Pancreas (tissue), 10 donors: ENCODE measurements at regions of chr16 and their contacts with region 1.

Region 1: DNA sequence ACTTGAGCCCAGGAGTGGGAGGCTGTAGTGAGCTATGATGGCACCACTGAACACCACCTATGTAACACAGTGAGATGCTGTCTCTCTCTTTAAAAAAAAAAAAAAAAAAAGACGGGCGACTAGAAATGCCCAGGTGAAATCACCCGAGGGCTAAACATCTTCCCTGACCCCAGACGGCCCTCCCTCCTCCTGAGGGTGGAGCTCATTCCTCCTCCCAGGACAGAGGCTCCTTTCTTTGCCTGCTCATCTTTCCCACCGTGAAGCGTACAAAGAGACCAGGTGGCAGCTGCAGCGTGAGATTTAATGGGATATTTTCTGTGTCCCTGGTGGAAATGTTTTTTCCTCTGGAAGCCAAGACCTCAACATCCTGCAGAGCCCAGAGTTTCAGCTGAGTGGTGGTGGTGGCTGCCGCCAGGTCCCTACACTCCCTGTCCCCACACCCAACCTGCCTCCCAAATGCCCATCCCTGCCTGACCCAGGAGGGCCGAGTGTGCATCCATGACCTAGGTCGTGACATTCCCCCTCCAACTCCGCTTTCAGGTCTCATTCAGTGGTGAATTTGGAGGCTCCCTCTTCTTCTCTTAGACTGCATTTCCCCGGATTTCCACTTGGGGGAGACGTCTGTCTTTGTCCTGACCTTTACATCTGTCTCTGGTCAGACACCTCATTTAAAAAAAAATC is 14.4 kb upstream of the GPRC5B start:
- DNase-seq: peak in 3 of 6 donors; percentile 26 to 61 (median 32)
- ATAC-seq: peak; percentile 64 to 87 (median 80)
- H3K4me3 ChIP-seq: no peak overlapping the region
- H3K27ac ChIP-seq: no peak overlapping the region
- H3K4me1 ChIP-seq: no peaks in the 10 kb centered on the region
- H3K27me3 ChIP-seq: no peaks in the 10 kb centered on the region
- CTCF ChIP-seq: peak; percentile 45 to 69 (median 58)

Region 2: GRCh38 chr16:19589771-19590302 is 309.2 kb before region 1 on chr16:
- intact Hi-C with region 1: loop called in 1 of 3 experiments (anchors 5 kb)
- DNase-seq: no peak
- ATAC-seq: peak in 1 of 4 donors; percentile 27
- H3K4me3 ChIP-seq: no peak overlapping the region
- H3K27ac ChIP-seq: no peak overlapping the region
- H3K4me1 ChIP-seq: peaks cover 0 to 4% (median 0%) of the 10 kb centered on the region in 3 donors
- H3K27me3 ChIP-seq: no peaks in the 10 kb centered on the region
- CTCF ChIP-seq: no peak

Region 3: DNA sequence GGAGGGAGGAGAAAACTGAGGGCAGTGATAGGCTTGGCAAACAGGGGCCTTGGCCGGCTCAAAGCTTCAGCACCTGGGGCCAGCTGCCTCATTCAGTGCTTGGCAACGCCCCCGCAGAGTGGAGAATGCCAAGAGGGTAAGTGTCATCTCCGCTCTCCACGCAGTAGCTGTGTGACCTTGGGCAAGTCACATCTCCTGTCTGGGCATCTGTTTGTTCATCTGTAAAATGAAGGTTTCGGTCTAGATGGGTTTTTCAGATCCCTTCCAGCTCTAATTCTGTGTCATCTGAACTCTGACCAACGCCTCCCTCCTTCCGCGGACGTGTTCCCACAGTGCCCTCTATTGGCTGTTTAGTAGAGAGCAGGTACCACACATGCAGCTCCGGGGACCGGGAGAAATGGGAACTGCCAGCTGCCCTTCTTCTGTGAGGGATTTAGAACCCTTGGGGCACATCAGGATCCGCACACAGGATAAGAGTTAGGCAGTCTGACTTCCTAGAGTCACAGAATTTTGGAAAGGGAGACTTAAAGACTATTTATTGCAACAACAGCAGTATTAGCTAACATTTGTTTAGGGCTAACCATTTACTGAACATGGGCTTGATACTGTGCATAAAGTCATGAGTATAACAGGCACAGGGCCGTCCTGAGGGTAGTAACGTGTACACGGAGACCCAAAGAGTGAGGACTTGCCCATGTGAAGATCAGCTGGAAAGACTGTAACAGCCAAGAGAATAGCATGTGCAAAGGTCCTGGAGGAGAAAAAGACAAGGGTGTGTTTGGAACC is 401.4 kb after region 1 on chr16:
- intact Hi-C with region 1: loop called in 2 of 3 experiments (anchors 5 to 10 kb)
- DNase-seq: peak; percentile 42 to 88 (median 73)
- ATAC-seq: peak; percentile 29 to 93 (median 67)
- H3K4me3 ChIP-seq: no peak overlapping the region
- H3K27ac ChIP-seq: no peak overlapping the region
- H3K4me1 ChIP-seq: no peaks in the 10 kb centered on the region
- H3K27me3 ChIP-seq: no peaks in the 10 kb centered on the region
- CTCF ChIP-seq: peak; percentile 30 to 68 (median 58)

Region 4: DNA sequence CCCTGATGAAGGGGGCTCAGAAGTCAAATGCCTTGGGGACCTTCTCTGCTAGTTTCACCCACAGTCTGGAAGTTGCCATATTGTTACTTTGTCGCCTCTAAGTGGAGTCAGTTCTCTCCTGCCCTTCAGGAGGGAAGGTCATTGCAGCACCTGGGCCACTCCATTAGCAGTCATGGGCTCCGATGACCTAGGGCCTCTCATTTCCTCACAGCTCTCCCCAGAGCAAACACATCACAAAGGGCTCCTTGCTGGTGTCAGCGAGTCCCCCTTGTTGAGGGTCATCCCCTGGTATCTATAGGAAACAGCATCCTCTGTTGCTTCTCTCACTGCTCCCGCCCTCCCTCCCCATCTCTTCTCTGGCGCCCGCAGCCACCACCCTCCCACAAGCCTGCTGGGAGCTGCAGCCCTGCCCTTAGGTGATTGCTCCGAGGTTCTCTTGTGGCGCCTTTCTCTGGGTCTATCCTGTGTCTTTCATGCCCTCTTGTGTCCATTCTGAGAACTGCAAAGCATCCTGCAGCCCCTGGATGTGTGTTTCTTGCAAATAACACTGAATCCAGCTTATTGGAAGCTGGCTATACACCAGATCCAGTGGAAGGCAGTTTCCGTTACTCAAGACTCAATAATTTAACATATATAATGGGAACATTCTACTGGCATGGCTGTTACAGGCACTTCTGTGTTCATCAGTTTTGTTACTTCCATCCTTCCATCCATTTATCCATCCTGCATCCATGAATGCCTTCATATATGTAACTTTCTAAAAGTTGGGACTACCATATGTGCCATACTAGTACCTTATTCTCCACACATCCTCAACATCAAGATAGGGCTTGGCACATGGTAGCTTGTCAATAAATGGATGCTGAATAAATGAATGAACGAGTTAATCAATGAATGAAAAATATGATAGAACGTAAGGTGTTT is 484.3 kb after region 1 on chr16:
- intact Hi-C with region 1: loop called in 2 of 3 experiments (anchors 5 to 10 kb)
- DNase-seq: peak; percentile 65 to 86 (median 74)
- ATAC-seq: peak; percentile 70 to 89 (median 85)
- H3K4me3 ChIP-seq: no peak overlapping the region
- H3K27ac ChIP-seq: no peak overlapping the region
- H3K4me1 ChIP-seq: peaks cover 0 to 13% (median 0%) of the 10 kb centered on the region in 3 donors
- H3K27me3 ChIP-seq: no peaks in the 10 kb centered on the region
- CTCF ChIP-seq: peak; percentile 75 to 91 (median 86)